Dorsolateral prefrontal cortex (tissue), 120 donors: ENCODE measurements at regions of chr2 and their contacts with region 1.

Region 1: GRCh38 chr2:14778015-14778414 is 145.5 kb downstream of the LRATD1 start:
- DNase-seq: no peak
- H3K4me3 ChIP-seq: no peak overlapping the region
- H3K27ac ChIP-seq: no peak overlapping the region
- H3K27me3 ChIP-seq: no peaks in the 10 kb centered on the region
- CTCF ChIP-seq: no peak

Region 2: DNA sequence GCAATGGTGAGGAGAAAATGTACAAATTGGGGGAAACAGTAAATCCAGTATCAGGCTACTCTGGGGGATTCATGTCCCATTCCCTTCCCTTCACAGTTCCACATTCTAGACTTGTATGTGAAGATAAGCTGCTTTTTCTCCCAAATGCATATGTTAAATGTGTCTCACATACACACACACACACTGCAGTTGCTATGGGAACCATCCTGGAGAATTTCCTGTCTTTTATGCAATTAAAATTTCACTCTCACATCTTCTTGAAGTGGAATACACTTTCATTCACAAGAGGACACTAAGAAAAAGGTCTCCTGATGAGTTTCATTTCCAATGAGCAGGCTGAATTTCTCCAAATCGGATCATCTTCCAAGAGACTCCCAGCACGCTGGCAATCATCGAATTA is 220.5 kb after region 1 on chr2:
- intact Hi-C with region 1: loop called in 1 of 2 experiments (anchors 10 kb)
- DNase-seq: no peak
- H3K4me3 ChIP-seq: no peak overlapping the region
- H3K27ac ChIP-seq: peak overlapping the region in 10 of 59 donors; percentile 4 to 67 (median 32)
- H3K27me3 ChIP-seq: no peaks in the 10 kb centered on the region
- CTCF ChIP-seq: no peak